Activated T-helper 1 cell treated with anti-CD3 and anti-CD28 coated beads, Interleukin-12 subunit alpha, Interleukin-12 subunit beta, Interleukin-2, Interleukin-4 antibody, amounts not matched to agents 30 ng/mL and 10 ng/mL and 1 ng/mL, durations not matched to agents 14 hours and 24 hours and 36 hours (primary cell): ENCODE measurements at regions of chr20 and their contacts with region 1.

Region 1: DNA sequence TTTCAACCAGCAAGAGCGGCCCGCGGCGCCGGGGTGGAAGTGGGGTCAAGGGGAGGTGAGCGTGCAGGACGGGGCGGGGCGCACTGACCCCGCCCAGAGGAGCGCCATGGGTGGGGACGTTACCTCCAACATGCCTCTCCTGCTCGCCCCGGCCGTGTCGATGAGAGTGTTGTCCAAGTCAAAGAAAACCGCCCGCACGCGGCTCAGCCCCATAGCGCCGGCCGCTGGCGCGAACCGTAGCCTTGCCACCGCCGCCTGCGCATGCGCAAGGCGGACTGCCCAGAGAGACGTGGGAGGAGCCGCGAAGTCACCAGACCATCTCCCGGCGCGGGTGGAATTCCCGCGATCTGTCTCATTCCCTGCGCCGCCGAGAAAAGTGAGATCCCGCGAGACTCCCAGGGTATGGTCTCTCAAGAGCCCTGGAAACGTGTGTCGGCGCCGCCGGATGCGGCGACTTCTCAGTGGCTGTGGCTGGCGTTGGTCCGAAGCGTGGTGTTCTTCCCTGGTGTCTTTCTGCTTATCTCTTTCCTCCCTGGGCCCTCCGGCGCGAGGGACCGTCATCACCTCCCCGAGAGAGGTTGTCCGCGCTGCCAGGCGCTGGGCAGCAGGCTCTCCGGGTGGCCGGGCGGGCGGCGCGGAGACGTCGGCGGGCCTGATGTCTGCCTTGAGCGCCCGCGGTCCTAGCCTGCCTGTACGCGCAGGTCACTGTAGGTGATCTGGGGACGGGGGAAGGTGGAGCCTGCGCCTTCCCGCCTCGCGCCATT is at the start of gene NANP:
- DNase-seq: peak; percentile 85
- H3K4me3 Mint-ChIP-seq: peak within 1 kb of the TSS; percentile 91
- H3K27ac Mint-ChIP-seq: peak within 1 kb of the TSS; percentile 98
- H3K4me1 Mint-ChIP-seq: peaks cover 39% of the 10 kb centered on the region
- H3K27me3 Mint-ChIP-seq: peaks cover 4% of the 10 kb centered on the region
- total RNA-seq, gene NANP: 9.1 and 9.8 TPM in 2 replicates

Region 2: DNA sequence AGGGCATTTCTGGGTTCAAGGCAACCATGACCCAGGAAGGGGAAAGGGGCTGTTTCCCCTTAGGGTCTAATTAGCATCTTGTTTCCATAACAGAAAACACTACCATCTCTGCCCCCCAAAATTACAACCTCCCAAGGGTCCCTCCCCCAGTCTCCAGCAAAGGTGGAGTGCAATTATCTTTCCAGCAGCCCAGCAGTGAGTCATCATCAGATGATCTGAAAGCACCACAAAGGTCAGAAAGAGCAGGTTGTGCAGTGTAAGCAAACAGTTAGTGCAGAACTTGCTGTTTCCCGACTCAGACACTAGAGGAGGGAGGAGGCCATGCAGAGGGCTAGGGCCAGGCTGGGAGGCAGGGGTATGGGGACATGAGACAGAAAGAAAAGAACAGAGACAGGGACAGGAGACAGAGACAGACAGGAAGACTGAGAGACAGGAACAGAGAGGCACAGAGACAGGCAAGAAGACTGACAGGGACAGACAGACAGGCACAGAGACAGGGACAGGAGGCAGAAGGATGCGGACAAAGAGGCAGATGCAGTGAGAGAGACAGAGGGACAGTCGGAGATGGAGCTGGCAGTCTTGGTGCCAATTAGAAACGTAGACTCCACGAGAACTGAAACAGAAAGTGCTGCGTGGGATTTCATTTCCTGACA is 313.5 kb before region 1 on chr20:
- intact Hi-C with region 1: loop called (anchors 1 kb)
- DNase-seq: peak; percentile 61
- H3K4me3 Mint-ChIP-seq: peak overlapping the region; percentile 81
- H3K27ac Mint-ChIP-seq: peak overlapping the region; percentile 98
- H3K4me1 Mint-ChIP-seq: peaks cover 46% of the 10 kb centered on the region
- H3K27me3 Mint-ChIP-seq: no peaks in the 10 kb centered on the region

Region 3: DNA sequence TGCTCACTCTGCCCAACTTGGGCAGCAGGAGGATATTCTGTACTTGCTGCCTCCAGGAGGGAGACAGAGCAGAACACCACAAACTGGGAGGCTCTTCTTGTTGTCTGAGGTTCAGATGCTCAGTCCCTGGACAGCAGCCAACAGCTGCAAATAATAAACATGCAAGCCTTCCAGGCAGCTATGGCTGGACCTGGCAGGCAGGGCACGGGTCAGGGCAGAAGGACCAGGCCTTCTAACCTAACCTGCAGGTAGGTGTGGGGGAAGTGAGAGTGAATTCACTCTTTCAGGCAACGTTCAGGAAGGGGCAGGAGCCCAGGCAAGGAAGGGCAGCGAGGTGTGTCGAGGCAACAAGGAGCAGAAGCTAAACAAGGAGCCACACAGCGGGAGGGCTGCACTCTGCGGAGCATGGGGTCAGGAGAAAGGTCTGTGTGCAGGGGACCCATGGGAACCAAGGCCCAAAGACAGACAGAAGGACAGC is 70.1 kb before region 1 on chr20:
- intact Hi-C with region 1: no loop called
- DNase-seq: no peak
- H3K4me3 Mint-ChIP-seq: no peak overlapping the region
- H3K27ac Mint-ChIP-seq: no peak overlapping the region
- H3K4me1 Mint-ChIP-seq: no peaks in the 10 kb centered on the region
- H3K27me3 Mint-ChIP-seq: no peaks in the 10 kb centered on the region

Region 4: GRCh38 chr20:25584905-25585704 is 38.8 kb before region 1 on chr20 and contains the start of gene NINL:
- intact Hi-C with region 1: loop called (anchors 1 kb)
- DNase-seq: peak; percentile 50
- H3K4me3 Mint-ChIP-seq: peak within 1 kb of the TSS; percentile 84
- H3K27ac Mint-ChIP-seq: peak within 1 kb of the TSS; percentile 64
- H3K4me1 Mint-ChIP-seq: peaks cover 12% of the 10 kb centered on the region
- H3K27me3 Mint-ChIP-seq: peaks cover 8% of the 10 kb centered on the region
- total RNA-seq, gene NINL: 2.0 and 2.5 TPM in 2 replicates

Region 5: DNA sequence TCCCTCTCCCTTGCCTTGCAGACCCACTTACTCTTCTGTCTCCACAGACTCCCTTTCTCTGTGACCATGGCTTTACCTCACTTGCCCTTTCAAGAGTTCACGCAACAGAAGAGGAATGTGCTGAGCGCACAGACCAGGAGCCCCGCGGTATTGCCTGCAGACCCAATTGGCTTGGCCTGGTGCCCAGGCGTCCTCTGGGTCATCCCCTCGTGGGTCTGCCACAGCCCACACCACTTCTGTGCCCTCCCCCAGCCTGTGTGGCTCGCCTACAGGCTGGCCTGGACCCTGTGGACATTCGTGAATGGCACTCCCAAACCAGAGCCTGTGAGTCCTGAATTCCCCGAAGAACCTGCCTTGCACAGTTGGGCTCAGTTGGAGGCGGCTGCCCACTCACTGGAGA is 23.3 kb before region 1 on chr20:
- intact Hi-C with region 1: loop called (anchors 1 kb)
- DNase-seq: no peak
- H3K4me3 Mint-ChIP-seq: no peak overlapping the region
- H3K27ac Mint-ChIP-seq: no peak overlapping the region
- H3K4me1 Mint-ChIP-seq: peaks cover 11% of the 10 kb centered on the region
- H3K27me3 Mint-ChIP-seq: peaks cover 2% of the 10 kb centered on the region

Region 6: DNA sequence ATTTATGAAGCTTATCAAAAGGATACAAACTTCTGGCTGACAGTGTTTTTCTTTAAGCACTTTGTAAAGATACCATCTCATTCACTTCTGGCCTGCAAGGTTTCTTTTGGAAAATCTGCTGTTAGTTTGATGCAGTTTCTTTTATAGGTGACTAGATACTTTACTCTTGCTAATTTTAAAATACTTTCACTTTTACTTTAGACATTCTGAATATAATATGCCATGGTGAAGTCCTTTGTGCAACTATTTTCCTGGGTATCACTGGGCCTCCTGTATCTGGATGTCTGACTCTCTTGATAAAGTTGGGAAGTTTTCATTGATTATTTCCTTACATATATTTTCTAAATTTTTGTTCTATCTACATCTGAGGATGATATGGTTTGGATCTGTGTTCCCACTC is 101.7 kb after region 1 on chr20:
- intact Hi-C with region 1: no loop called
- DNase-seq: no peak
- H3K4me3 Mint-ChIP-seq: no peak overlapping the region
- H3K27ac Mint-ChIP-seq: no peak overlapping the region
- H3K4me1 Mint-ChIP-seq: peaks cover 14% of the 10 kb centered on the region
- H3K27me3 Mint-ChIP-seq: no peaks in the 10 kb centered on the region